ENCODE measurements at regions of chr1 and their contacts with region 1.

Region 1: GRCh38 chr1:217681806-217682205 is 50.7 kb downstream of the SPATA17 start:
- DNase-seq: no peak
- H3K4me3 ChIP-seq: no peak overlapping the region
- H3K4me3 Mint-ChIP-seq: no peak overlapping the region
- H3K27ac Mint-ChIP-seq: no peak overlapping the region
- H3K4me1 ChIP-seq: no peaks in the 10 kb centered on the region
- H3K4me1 Mint-ChIP-seq: no peaks in the 10 kb centered on the region
- H3K27me3 ChIP-seq: no peaks in the 10 kb centered on the region
- H3K27me3 Mint-ChIP-seq: no peaks in the 10 kb centered on the region
- CTCF ChIP-seq: no peak

Region 2: GRCh38 chr1:217495249-217495648 is 186.6 kb before region 1 on chr1:
- CTCF ChIA-PET with region 1: no interaction called
- POLR2A ChIA-PET with region 1: no interaction called
- intact Hi-C with region 1: no loop called
- DNase-seq: no peak
- H3K4me3 ChIP-seq: no peak overlapping the region
- H3K4me3 Mint-ChIP-seq: no peak overlapping the region
- H3K27ac Mint-ChIP-seq: no peak overlapping the region
- H3K4me1 ChIP-seq: 0 out of 2 replicates have a peak, but pooled peaks cover 5% of the 10 kb centered on the region
- H3K4me1 Mint-ChIP-seq: peaks cover 6% of the 10 kb centered on the region
- H3K27me3 ChIP-seq: no peaks in the 10 kb centered on the region
- H3K27me3 Mint-ChIP-seq: no peaks in the 10 kb centered on the region
- CTCF ChIP-seq: no peak

Region 3: DNA sequence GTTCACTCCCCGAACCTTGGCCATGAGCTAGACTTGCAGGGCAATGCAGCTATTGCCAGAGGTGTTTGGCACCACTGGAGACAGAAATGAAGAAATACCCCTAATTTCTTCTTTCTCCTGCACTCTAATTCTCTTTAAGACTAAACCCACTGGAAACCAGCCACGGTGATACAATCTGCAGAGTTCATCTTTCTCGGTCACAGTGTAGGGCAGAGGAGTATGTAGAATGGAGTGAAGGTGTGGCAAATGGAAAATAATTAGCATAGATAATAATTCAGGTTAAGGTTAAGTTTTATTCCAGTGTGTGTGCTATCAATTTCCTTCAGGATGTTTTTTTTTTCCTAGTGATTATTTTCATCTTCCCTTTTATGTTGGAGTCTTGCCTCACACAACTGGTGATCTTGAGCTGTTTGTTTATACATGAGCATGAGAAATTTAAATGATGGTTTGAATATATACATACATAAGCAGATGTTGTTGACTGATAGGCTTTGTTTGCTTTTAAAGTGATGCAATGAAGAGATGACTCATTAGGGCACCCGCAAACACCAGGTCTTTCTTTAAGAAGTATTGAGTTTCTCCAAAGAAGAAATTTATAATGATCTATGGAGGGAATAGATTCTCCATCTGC is 31.2 kb after region 1 on chr1:
- CTCF ChIA-PET with region 1: no interaction called
- POLR2A ChIA-PET with region 1: no interaction called
- intact Hi-C with region 1: no loop called
- DNase-seq: no peak
- H3K4me3 ChIP-seq: no peak overlapping the region
- H3K4me3 Mint-ChIP-seq: no peak overlapping the region
- H3K27ac Mint-ChIP-seq: no peak overlapping the region
- H3K4me1 ChIP-seq: peaks cover 11% of the 10 kb centered on the region
- H3K4me1 Mint-ChIP-seq: peaks cover 6% of the 10 kb centered on the region
- H3K27me3 ChIP-seq: no peaks in the 10 kb centered on the region
- H3K27me3 Mint-ChIP-seq: peaks cover under 1% of the 10 kb centered on the region
- CTCF ChIP-seq: no peak

Region 4: GRCh38 chr1:217747156-217747769 is 65.5 kb after region 1 on chr1:
- CTCF ChIA-PET with region 1: no interaction called
- POLR2A ChIA-PET with region 1: no interaction called
- intact Hi-C with region 1: loop called (anchors 10 kb)
- DNase-seq: no peak
- H3K4me3 ChIP-seq: no peak overlapping the region
- H3K4me3 Mint-ChIP-seq: no peak overlapping the region
- H3K27ac Mint-ChIP-seq: no peak overlapping the region
- H3K4me1 ChIP-seq: no peaks in the 10 kb centered on the region
- H3K4me1 Mint-ChIP-seq: no peaks in the 10 kb centered on the region
- H3K27me3 ChIP-seq: no peaks in the 10 kb centered on the region
- H3K27me3 Mint-ChIP-seq: no peaks in the 10 kb centered on the region
- CTCF ChIP-seq: peak; percentile 71 to 77

Region 5: GRCh38 chr1:217847643-217848042 is 165.8 kb after region 1 on chr1:
- CTCF ChIA-PET with region 1: no interaction called
- POLR2A ChIA-PET with region 1: no interaction called
- intact Hi-C with region 1: no loop called
- DNase-seq: no peak
- H3K4me3 ChIP-seq: no peak overlapping the region
- H3K4me3 Mint-ChIP-seq: no peak overlapping the region
- H3K27ac Mint-ChIP-seq: no peak overlapping the region
- H3K4me1 ChIP-seq: no peaks in the 10 kb centered on the region
- H3K4me1 Mint-ChIP-seq: no peaks in the 10 kb centered on the region
- H3K27me3 ChIP-seq: no peaks in the 10 kb centered on the region
- H3K27me3 Mint-ChIP-seq: no peaks in the 10 kb centered on the region
- CTCF ChIP-seq: no peak